ENCODE measurements at regions of chr9 and their contacts with region 1.

Region 1: GRCh38 chr9:27539479-27540441 is 10.1 kb upstream of the MOB3B start:
- DNase-seq: peak in 2 of 4 donors; percentile 22 to 31
- ATAC-seq: peak; percentile 74
- H3K4me3 ChIP-seq: no peak overlapping the region
- H3K27ac ChIP-seq: peak overlapping the region; percentile 17 to 75 (median 57)
- H3K4me1 ChIP-seq: peaks cover 37% of the 10 kb centered on the region
- H3K27me3 ChIP-seq: no peaks in the 10 kb centered on the region
- CTCF ChIP-seq: no peak
- POLR2A ChIP-seq: no peak

Region 2: DNA sequence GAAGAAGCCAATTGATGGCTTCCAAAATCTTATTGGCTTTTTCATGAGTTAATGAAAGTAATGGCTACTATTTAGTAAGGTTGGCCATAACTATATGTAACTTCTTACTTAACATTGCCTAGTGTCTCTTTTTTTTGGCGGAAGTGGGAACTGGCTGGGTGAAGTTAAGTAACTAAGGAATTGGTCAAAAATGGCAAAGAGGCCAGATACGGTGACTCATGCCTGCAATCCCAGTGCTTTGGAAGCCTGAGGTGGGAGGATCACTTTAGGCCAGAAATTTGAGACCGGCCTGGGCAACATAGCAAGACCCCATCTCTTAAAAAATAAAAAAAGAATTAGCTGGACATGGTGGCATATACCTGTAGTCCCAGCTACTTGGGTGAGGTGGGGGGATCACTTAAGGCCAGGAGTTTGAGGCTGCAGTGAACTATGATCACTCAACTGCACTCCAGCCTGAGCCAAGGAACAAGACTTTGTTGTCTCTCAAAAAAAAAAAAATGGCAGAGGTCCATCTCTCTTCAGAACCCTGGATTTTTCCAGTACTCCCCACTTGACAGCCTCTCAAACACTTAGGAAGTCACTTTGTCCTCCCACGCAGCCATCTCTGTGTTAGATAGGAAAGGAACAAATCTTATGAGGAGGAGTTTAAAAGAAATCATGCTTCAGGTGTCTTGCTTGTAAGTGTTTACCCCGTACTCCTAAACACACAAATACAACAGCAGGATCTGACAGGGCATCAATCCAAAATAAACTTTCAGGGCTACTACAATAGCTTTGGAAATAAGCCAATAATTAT is 355.0 kb before region 1 on chr9:
- intact Hi-C with region 1: no loop called
- DNase-seq: peak in 2 of 4 donors; percentile 47 to 57
- ATAC-seq: no peak
- H3K4me3 ChIP-seq: no peak overlapping the region
- H3K27ac ChIP-seq: no peak overlapping the region
- H3K4me1 ChIP-seq: peaks cover 11% of the 10 kb centered on the region
- H3K27me3 ChIP-seq: no peaks in the 10 kb centered on the region
- CTCF ChIP-seq: no peak
- POLR2A ChIP-seq: no peak

Region 3: DNA sequence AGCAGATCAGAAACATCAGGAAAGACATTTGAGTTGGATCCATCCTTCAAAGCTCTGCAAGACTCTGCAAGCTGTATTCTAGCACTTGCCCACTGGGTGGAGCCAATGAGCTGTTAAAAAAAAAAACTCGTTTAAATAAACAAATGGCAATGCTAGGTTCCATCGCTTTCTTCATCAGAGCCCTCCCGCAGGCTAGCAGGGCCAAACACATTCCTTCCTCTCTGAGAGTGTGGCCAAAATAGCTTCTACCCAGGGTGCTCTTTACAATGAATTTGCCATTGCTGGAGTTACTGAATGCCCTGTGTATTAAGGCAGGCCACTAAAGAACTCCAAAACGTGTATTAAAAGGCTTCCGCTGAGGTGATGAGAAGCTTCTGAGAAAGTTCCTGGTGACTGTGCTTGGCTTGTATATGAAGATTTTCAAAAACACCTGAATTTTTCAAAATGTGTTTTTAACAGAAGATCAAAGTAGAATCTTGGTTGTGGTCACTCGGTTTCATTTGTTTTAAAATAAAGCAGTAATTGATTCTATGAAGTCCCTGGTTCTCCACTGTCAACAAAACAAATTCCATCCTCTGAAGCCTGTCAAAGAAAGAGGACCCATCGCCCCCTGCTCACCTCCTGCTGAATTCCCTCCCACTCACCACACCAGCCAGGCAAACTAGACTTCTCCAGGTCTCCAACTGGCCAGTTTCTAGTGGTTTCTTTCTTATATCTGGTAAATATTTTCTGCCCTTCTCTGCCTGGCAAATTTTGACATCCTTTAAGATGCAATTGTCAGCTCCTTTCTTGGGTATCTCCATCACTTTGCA is 206.3 kb before region 1 on chr9:
- intact Hi-C with region 1: loop called (anchors 5 kb)
- DNase-seq: peak; percentile 61 to 75 (median 68)
- ATAC-seq: peak; percentile 90
- H3K4me3 ChIP-seq: no peak overlapping the region
- H3K27ac ChIP-seq: no peak overlapping the region
- H3K4me1 ChIP-seq: peaks cover 15% of the 10 kb centered on the region
- H3K27me3 ChIP-seq: no peaks in the 10 kb centered on the region
- CTCF ChIP-seq: peak; percentile 58 to 91 (median 84)
- POLR2A ChIP-seq: no peak